ENCODE measurements at regions of chr2 and their contacts with region 1.

Region 1: DNA sequence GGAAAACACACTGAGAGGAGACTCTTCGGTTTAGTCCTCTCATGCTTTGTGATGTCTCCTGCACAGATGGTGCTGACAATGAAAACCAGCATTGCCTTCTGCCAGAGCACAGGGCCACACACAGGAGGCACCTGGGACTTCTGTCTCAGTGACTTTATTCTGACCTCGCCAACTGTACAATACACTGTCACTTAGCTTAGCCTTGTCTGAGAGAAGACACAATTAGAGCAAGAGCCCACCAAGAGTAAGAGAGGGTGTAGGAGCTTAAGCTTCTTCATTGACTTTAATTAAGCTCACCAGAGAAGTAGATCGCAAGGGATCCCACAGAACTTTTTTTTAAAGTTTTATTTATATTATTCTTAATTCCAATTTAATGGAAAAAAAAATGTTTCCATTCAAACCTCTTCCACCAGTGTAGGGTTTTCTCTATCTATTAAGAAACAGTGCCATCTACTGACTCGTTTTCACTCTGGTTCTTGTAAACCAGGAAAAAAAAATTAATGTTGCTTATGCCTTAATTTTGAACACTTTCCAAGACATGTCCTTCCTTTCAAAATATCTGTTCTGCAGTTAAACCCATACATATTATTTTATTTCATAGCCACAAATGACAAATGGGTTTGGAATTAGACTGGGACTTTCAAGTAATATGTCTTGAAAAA is 42.4 kb upstream of the DDX18 start:
- DNase-seq: no peak
- H3K4me3 Mint-ChIP-seq: no peak overlapping the region
- H3K27ac Mint-ChIP-seq: no peak overlapping the region
- H3K4me1 Mint-ChIP-seq: no peaks in the 10 kb centered on the region
- H3K27me3 Mint-ChIP-seq: no peaks in the 10 kb centered on the region

Region 2: DNA sequence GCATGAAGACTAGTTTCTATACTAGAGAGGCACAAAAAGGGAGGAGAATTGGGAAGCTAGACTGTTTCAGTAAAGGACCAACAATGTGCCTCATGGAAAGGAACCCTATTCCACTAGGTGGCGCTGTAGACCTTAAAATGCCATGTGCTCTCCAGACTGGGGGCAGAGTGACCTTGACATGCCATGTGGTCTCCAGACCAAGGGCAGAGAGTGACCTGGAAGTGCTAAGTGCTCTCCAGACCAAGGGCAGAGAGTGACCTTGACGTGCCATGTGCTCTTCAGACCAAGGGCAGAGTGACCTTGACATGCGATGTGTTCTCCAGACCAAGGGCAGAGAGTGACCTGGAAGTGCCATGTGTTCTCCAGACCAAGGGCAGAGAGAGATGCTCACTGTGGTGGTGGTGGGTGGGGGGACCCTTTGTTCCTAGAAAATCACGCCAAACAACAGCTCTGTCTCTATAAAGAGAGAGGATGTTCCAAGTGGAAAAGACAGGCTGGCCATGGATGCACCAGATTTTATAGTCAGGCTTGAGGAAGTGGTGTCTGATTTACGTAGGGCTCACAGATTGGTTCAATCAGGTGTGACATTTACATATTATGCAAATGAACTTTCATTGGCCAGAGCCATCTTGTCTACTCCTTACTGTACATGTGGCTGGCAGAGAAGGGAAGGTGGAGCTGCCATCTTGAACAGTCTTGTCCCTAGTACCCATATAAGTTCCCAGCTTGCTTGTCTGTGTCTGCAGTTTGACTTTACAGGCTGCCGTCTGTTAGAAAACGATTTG is 301.6 kb before region 1 on chr2:
- intact Hi-C with region 1: loop called (anchors 10 kb)
- DNase-seq: no peak
- H3K4me3 Mint-ChIP-seq: no peak overlapping the region
- H3K27ac Mint-ChIP-seq: no peak overlapping the region
- H3K4me1 Mint-ChIP-seq: no peaks in the 10 kb centered on the region
- H3K27me3 Mint-ChIP-seq: no peaks in the 10 kb centered on the region

Region 3: DNA sequence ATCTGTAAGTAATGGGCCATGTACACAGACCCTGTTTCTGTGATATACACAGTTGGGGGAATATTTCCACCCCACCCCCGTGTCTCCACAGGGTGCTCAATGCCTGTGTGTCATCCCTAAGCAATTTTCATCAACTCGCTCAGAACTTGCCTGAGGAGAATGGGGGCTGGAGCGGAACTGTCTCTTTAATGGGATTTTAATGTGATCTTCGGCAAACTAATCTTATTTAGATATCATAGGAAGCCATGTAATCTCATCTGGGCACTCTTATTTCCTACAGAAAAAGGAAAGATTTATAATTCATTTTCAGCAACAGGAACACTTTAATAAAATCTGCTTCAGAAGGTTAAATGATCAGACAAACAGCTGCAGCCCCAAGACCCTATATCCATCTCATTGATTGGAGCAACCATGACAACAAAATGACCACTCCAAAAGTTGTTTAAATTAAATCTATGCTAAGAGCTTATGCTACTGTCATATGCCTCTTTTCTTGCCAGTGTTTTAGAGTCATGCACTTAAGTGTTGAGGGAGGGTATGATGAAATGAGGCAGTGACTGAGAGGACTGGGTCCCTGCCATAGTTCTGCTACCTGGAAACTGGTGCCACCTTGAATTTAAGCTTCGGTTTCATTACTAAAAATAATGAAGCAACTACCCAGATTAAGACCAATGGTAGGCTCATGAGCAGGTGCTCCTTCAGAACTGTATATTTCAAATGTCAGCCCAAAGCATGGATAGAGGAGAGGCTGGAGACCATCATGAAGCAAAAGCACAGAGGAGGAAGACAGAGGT is 140.8 kb before region 1 on chr2:
- intact Hi-C with region 1: no loop called
- DNase-seq: no peak
- H3K4me3 Mint-ChIP-seq: no peak overlapping the region
- H3K27ac Mint-ChIP-seq: no peak overlapping the region
- H3K4me1 Mint-ChIP-seq: no peaks in the 10 kb centered on the region
- H3K27me3 Mint-ChIP-seq: no peaks in the 10 kb centered on the region